Activated CD4-positive, alpha-beta memory T cell treated with anti-CD3 and anti-CD28 coated beads, Interleukin-2, amount 10 ng/mL, durations not matched to agents 7 days and 5 days (primary cell): ENCODE measurements at regions of chr17 and their contacts with region 1.

Region 1: GRCh38 chr17:17141860-17142552 is 64.1 kb downstream of the PLD6 start:
- DNase-seq: peak; percentile 62
- H3K4me3 Mint-ChIP-seq: no peak overlapping the region
- H3K27ac Mint-ChIP-seq: peak overlapping the region; percentile 66
- H3K4me1 Mint-ChIP-seq: peaks cover 7% of the 10 kb centered on the region
- H3K27me3 Mint-ChIP-seq: no peaks in the 10 kb centered on the region

Region 2: DNA sequence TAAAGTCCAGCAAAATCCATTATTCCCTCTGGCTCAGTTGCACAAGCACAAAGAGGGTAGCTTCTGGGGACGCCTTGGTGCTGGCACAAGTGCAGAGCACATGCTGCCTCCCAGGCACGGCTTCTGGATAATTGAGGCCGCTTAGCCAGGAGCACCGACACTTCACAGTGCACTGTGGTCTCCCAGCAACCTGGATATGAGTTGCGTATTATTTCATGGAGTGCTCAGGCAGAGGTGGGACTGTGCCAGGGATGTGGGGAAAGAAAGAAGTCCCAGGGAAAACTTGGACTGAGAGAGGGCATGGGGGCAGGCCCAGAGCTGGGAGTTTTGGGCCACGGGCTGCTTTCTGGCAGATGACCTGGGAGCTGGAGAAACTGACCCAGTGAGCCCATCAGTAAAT is 62.3 kb before region 1 on chr17:
- CTCF ChIA-PET with region 1: no interaction called
- POLR2A ChIA-PET with region 1: no interaction called
- DNase-seq: no peak
- H3K4me3 Mint-ChIP-seq: no peak overlapping the region
- H3K27ac Mint-ChIP-seq: no peak overlapping the region
- H3K4me1 Mint-ChIP-seq: peaks cover 9% of the 10 kb centered on the region
- H3K27me3 Mint-ChIP-seq: no peaks in the 10 kb centered on the region

Region 3: GRCh38 chr17:17220529-17220928 is 78.5 kb after region 1 on chr17:
- CTCF ChIA-PET with region 1: no interaction called
- POLR2A ChIA-PET with region 1: no interaction called
- DNase-seq: no peak
- H3K4me3 Mint-ChIP-seq: no peak overlapping the region
- H3K27ac Mint-ChIP-seq: no peak overlapping the region
- H3K4me1 Mint-ChIP-seq: no peaks in the 10 kb centered on the region
- H3K27me3 Mint-ChIP-seq: no peaks in the 10 kb centered on the region

Region 4: DNA sequence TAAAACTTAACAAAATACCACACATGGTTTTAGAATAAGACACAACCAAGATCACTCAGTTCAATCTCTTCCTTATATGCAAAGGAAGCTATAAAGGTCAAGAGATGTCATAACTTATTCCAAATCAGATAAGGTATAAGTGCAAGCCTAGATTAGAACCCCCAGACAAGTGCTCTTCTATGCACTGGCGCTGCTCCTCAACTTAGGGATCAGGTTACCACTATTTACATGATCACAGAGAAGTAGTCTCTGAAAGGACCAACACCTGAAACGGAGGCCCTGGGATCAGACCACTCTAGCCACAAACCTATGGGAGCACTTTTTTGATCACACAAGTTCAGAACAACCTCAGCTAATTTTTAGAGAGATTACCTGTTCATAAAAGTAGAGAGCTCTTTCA is 122.4 kb after region 1 on chr17:
- CTCF ChIA-PET with region 1: interaction called, 10 read pairs
- POLR2A ChIA-PET with region 1: no interaction called
- DNase-seq: no peak
- H3K4me3 Mint-ChIP-seq: no peak overlapping the region
- H3K27ac Mint-ChIP-seq: no peak overlapping the region
- H3K4me1 Mint-ChIP-seq: no peaks in the 10 kb centered on the region
- H3K27me3 Mint-ChIP-seq: no peaks in the 10 kb centered on the region